ENCODE measurements at regions of chr2 and their contacts with region 1.

Region 1: DNA sequence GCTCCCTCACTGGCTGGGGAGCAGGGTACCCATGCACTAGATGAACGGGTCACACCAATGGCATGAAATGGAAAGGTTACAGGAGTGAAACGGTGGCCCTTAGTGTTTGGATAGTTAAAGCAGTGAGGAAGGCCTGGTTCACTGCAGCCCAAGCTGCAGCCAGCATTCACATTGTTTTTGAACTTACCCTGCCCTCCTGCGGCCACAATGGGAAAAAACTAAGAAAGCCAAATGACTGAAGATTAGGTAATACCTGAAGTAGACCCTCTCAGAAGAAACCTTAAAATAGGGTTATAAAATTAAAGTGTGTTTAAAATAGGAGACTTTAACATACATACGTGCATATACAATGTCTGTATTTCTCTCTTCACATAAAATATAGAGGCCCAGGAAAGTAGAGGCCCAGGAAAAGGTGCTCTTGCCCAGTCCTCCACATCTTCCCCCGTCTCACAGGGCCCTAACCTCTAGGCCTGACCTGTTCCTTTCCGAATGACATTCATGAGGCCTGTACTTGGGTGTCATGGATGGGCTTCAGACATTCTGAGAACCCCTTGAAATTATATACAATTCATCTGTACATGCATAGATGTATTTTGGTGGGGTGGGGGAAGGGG is 33.3 kb downstream of the DOK1 start:
- DNase-seq: peak; percentile 82
- CTCF ChIP-seq: peak; percentile 73

Region 2: GRCh38 chr2:74334931-74335333 is 252.8 kb before region 1 on chr2:
- CTCF ChIA-PET with region 1: interaction called, 13 read pairs
- POLR2A ChIA-PET with region 1: no interaction called
- DNase-seq: peak; percentile 65
- CTCF ChIP-seq: peak; percentile 99

Region 3: DNA sequence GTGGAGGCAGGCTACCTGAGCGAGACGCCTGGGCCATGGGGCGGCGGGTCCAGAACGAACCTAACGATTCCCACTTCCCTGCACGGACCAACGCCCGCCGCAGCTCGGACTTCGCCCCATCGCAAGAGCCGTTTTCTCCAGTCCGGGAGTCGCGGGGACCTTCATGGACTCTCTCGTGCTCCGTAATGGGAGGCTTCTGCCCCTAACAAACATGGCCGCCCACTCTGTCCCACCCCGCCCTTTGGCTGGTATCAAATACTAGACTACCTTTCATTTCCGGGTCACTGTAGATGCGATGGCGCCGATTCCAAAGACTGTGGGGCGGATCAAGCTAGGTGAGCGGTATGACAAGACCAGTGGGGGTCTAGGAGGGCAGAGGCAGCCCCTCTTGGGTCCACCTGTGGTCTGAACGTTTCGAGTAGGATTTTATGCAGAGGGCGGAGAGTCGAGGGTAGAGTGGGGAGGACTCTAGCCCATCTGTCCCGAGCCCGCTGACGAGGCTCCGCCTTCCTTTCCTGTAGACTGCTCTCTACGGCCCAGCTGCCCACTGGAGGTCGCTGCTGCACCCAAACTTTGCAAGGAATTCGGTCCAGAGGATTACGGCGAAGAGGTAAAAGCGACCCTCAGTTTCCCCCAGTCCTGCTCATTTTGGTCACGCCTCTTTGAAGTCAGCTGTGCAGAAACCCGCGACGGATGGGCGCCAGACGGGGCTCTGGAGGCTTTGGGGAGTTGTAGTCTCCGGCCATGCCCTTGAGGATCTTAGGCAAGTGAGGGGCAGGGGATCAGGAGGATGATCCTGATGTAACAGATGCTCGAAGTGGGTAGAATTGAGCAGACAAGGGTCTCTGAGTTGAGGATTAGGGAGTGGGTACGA is 104.7 kb before region 1 on chr2 and contains the starts of genes CCDC142 and TTC31:
- CTCF ChIA-PET with region 1: interaction called, 106 read pairs
- POLR2A ChIA-PET with region 1: no interaction called
- DNase-seq: peak; percentile 93
- CTCF ChIP-seq: peak; percentile 88

Region 4: DNA sequence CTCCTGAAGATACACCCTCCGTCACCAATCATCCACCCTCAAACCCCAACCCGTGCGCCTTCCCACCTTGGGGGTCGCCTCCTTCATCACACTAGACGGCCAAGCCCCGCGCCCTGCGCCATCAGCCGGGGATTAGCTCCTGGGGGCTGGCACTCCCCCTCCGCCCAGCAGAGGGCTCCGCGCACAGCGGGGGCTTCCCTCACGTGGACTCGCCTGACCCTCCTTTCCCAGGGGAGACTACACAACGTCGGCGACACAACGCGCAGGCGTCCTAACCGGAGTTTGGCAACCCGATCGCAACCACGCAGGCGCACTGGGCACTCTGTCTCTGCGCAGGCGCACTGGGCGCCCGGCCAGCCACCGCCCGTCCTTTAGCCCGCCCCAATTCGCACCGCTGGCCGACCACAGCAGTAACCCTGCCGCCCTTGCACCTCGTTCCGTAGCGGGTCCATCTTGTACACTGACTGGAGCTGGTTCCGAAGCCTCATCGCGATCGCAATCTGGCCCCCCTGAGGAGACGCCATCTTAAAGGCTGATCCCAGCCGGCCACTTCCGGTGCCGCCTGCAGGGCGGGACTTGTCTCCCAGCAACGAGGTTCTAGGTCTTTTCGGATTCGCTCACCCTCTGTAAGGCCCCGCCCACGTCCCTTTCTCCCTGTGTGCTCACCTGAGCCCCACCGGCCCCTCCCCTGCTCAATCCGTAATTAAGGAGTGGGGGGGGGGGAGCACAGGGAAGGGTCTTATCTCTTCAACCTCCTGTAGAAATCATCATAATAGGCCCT is 80.4 kb before region 1 on chr2 and contains the start of gene PCGF1:
- CTCF ChIA-PET with region 1: interaction called, 20 read pairs
- POLR2A ChIA-PET with region 1: no interaction called
- DNase-seq: peak; percentile 97
- CTCF ChIP-seq: peak; percentile 61

Region 5: DNA sequence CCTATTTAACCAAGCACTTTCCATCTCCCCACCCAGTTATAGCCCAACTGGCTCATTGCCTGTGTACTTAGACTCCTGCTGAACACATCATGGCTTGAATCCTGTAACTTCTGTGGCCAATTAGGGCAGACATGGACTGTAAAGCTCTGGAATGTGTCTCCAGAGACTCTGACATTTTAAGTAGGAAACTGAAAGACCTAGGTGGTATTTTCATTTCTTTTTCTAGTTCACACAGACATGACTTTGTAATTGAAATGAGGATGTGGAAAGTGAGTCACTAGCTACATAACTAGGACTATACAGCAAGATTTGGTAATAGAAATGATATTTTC is 21.1 kb before region 1 on chr2:
- CTCF ChIA-PET with region 1: interaction called, 188 read pairs
- POLR2A ChIA-PET with region 1: no interaction called
- DNase-seq: no peak
- CTCF ChIP-seq: no peak

Region 6: GRCh38 chr2:74602586-74603281 is 15.0 kb after region 1 on chr2:
- CTCF ChIA-PET with region 1: interaction called, 101 read pairs
- POLR2A ChIA-PET with region 1: no interaction called
- DNase-seq: no peak
- CTCF ChIP-seq: no peak